ENCODE measurements at regions of chr6 and their contacts with region 1.

Region 1: DNA sequence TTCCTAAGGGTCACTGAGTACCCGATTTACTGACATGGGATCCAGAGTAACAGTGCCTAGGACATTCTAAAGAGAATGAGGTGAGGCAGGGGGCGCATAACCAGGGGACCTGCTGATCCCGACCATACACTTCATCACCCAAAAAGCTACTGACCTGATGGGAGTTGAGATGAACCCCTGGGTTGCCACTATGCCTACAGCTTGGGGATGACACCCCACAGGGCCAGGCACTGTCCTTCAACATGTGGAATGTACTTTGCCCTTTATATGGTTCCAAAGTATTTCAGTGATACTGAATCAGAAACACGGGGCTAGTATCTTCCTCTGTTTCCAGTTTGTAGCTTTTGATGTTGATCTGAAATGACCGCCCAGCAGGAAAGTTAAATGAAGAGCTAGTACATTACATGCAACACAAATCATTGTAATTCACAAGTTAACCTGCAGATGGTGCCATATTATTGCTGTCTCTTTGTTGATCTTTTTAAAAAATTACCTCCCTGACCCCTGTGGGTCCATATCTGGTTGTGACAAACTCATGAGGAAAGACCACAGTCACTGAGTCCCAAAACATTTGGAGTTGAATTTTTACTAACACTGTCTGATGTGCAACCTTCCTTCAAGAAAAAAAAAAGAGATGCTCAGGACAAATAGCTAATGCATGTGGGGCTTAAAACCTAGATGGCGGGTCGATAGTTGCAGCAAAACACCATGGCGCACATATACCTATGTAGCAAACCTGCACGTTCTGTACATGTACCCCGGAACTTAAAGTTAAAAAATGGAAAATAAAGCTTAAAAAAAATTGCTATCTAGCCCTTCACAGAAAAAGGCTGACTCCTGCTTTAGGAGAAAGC is 42.7 kb upstream of the GCNT2 start:
- DNase-seq: peak; percentile 5 to 45 (median 33)
- H3K4me3 ChIP-seq: no peak overlapping the region
- H3K4me3 Mint-ChIP-seq: no peak overlapping the region
- H3K27ac ChIP-seq: no peak overlapping the region
- H3K27ac Mint-ChIP-seq: no peak overlapping the region
- H3K4me1 ChIP-seq: no peaks in the 10 kb centered on the region
- H3K4me1 Mint-ChIP-seq: no peaks in the 10 kb centered on the region
- H3K27me3 ChIP-seq: no peaks in the 10 kb centered on the region
- H3K27me3 Mint-ChIP-seq: peaks cover 2 to 9% (median 3%) of the 10 kb centered on the region in 3 donors
- CTCF ChIP-seq: peak; percentile 79

Region 2: DNA sequence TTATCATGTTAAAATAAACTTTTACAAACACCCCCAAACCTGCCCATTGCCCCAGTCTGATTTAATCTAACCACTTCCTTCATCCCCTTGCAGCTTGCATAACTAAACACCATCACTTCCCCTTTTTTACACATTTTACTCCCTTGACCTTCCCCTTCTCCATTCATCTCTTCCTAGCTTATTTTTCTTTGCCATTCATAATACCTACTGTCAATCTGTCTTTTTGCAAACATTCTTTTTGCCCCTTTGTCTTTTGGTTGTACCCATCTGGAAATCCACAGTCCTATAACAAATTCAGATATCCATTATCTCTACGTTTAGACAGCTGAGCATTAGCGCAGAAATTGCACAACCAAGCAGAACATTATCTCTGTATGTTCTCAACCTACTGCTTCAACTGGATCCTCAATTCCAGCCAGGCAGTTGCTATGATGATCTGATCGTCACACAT is 164.8 kb after region 1 on chr6:
- intact Hi-C with region 1: no loop called
- DNase-seq: peak; percentile 67 to 80 (median 79)
- H3K4me3 ChIP-seq: peak overlapping the region in 2 of 3 experiments; percentile 9 to 57
- H3K4me3 Mint-ChIP-seq: peak overlapping the region in 1 of 2 donors; percentile 77
- H3K27ac ChIP-seq: peak overlapping the region in 1 of 2 donors; percentile 60
- H3K27ac Mint-ChIP-seq: peak overlapping the region; percentile 58 to 92 (median 87)
- H3K4me1 ChIP-seq: peaks cover 34 to 35% of the 10 kb centered on the region in 2 donors
- H3K4me1 Mint-ChIP-seq: peaks cover 40% of the 10 kb centered on the region
- H3K27me3 ChIP-seq: no peaks in the 10 kb centered on the region
- H3K27me3 Mint-ChIP-seq: peaks cover 0 to 2% (median 2%) of the 10 kb centered on the region in 3 donors
- CTCF ChIP-seq: no peak

Region 3: GRCh38 chr6:10800829-10801535 is 322.6 kb after region 1 on chr6:
- intact Hi-C with region 1: loop called (anchors 2 to 5 kb)
- DNase-seq: peak; percentile 38 to 62 (median 52)
- H3K4me3 ChIP-seq: no peak overlapping the region
- H3K4me3 Mint-ChIP-seq: no peak overlapping the region
- H3K27ac ChIP-seq: no peak overlapping the region
- H3K27ac Mint-ChIP-seq: no peak overlapping the region
- H3K4me1 ChIP-seq: no peaks in the 10 kb centered on the region
- H3K4me1 Mint-ChIP-seq: peaks cover 4% of the 10 kb centered on the region
- H3K27me3 ChIP-seq: no peaks in the 10 kb centered on the region
- H3K27me3 Mint-ChIP-seq: peaks cover 0 to 5% (median 0%) of the 10 kb centered on the region in 3 donors
- CTCF ChIP-seq: peak; percentile 98

Measured in CD14-positive monocyte (primary cell).